ENCODE measurements at regions of chr18 and their contacts with region 1.

Region 1: GRCh38 chr18:12657684-12658425 is at the start of gene SPIRE1:
- DNase-seq: peak; percentile 81
- H3K4me3 Mint-ChIP-seq: peak within 1 kb of the TSS; percentile 54
- H3K27ac Mint-ChIP-seq: peak within 1 kb of the TSS; percentile 93
- H3K4me1 Mint-ChIP-seq: peaks cover 38% of the 10 kb centered on the region
- H3K27me3 Mint-ChIP-seq: no peaks in the 10 kb centered on the region
- CTCF ChIP-seq: no peak
- total RNA-seq, gene SPIRE1: 91.7 and 98.6 TPM in 2 replicates

Region 2: DNA sequence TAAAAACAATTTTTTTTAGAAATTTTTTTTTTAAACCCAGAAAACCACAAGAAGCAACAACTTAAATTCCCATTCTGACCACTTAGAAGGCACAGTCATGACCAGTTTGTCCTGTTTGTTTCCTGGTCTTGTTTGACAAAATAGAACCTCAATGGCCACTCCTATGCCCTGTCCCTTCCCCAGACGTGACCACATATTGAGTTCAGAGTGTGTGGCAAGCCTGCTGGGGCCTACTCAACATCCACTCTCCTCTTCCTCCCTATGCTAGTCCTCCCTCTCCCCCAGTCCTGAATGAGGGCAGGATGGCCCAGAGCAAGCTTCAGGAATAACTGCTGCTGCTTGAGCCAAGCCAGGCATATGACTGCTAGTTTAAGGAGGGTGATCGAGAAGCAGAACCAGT is 160.6 kb before region 1 on chr18:
- CTCF ChIA-PET with region 1: no interaction called
- intact Hi-C with region 1: loop called (anchors 10 kb)
- DNase-seq: no peak
- H3K4me3 Mint-ChIP-seq: no peak overlapping the region
- H3K27ac Mint-ChIP-seq: no peak overlapping the region
- H3K4me1 Mint-ChIP-seq: peaks cover 8% of the 10 kb centered on the region
- H3K27me3 Mint-ChIP-seq: no peaks in the 10 kb centered on the region
- CTCF ChIP-seq: no peak

Region 3: DNA sequence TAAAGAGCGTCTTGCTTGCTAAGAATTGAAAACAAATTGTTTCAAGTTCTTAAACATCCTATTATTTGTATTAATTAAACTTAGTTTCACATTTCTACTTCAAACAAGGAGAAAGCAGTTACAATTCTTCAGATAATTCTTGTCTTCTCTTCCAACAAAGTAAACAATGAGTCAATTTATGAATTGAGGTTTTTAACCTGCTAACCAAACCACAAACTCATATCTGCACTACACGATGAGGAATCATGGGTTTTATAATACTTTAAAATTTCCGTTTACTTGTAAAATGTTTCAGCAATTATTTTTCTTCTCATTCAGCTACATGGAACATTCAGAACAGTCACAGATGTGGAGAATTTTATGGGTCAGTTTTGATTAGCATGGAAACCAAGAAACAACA is 114.2 kb before region 1 on chr18:
- CTCF ChIA-PET with region 1: interaction called, 12 read pairs
- intact Hi-C with region 1: loop called (anchors 2 kb)
- DNase-seq: no peak
- H3K4me3 Mint-ChIP-seq: no peak overlapping the region
- H3K27ac Mint-ChIP-seq: peak overlapping the region; percentile 8
- H3K4me1 Mint-ChIP-seq: peaks cover 61% of the 10 kb centered on the region
- H3K27me3 Mint-ChIP-seq: no peaks in the 10 kb centered on the region
- CTCF ChIP-seq: no peak

Region 4: GRCh38 chr18:12597775-12598174 is 60.1 kb before region 1 on chr18:
- CTCF ChIA-PET with region 1: no interaction called
- intact Hi-C with region 1: loop called (anchors 5 kb)
- DNase-seq: peak; percentile 75
- H3K4me3 Mint-ChIP-seq: peak overlapping the region; percentile 18
- H3K27ac Mint-ChIP-seq: peak overlapping the region; percentile 74
- H3K4me1 Mint-ChIP-seq: peaks cover 63% of the 10 kb centered on the region
- H3K27me3 Mint-ChIP-seq: no peaks in the 10 kb centered on the region
- CTCF ChIP-seq: no peak

Region 5: GRCh38 chr18:12803096-12803936 is 145.5 kb after region 1 on chr18:
- CTCF ChIA-PET with region 1: no interaction called
- intact Hi-C with region 1: no loop called
- DNase-seq: no peak
- H3K4me3 Mint-ChIP-seq: no peak overlapping the region
- H3K27ac Mint-ChIP-seq: no peak overlapping the region
- H3K4me1 Mint-ChIP-seq: peaks cover 11% of the 10 kb centered on the region
- H3K27me3 Mint-ChIP-seq: no peaks in the 10 kb centered on the region
- CTCF ChIP-seq: no peak

Region 6: DNA sequence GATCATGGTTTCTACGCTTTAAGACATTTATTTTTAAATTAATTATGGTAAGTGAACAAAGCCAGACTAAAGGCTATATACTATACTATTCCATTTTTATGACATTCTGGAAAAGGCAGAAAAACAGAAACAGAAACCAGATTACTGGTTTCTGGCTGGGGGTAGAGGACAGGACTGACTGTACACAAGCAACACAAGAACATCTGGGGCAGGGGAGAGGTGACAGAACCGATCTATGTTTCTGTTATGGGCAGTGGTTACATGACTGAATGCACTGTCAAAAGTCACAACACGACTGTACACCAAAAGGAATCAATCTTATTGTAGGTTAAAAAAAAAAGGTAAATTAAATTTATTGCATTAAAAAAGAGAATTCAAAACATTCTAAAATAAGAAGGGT is 161.5 kb after region 1 on chr18:
- CTCF ChIA-PET with region 1: no interaction called
- intact Hi-C with region 1: no loop called
- DNase-seq: no peak
- H3K4me3 Mint-ChIP-seq: no peak overlapping the region
- H3K27ac Mint-ChIP-seq: no peak overlapping the region
- H3K4me1 Mint-ChIP-seq: no peaks in the 10 kb centered on the region
- H3K27me3 Mint-ChIP-seq: no peaks in the 10 kb centered on the region
- CTCF ChIP-seq: no peak

Measured in Calu3 (cell line).